ENCODE measurements at regions of chr18 and their contacts with region 1.

Region 1: GRCh38 chr18:74994502-74995419 is 214.2 kb downstream of the PTGR3 start:
- DNase-seq: no peak
- H3K4me3 Mint-ChIP-seq: peak overlapping the region; percentile 59
- H3K27ac Mint-ChIP-seq: peak overlapping the region; percentile 89
- H3K4me1 Mint-ChIP-seq: peaks cover 47% of the 10 kb centered on the region
- H3K27me3 Mint-ChIP-seq: no peaks in the 10 kb centered on the region

Region 2: GRCh38 chr18:74935434-74935833 is 59.3 kb before region 1 on chr18:
- CTCF ChIA-PET with region 1: no interaction called
- POLR2A ChIA-PET with region 1: no interaction called
- DNase-seq: no peak
- H3K4me3 Mint-ChIP-seq: no peak overlapping the region
- H3K27ac Mint-ChIP-seq: no peak overlapping the region
- H3K4me1 Mint-ChIP-seq: no peaks in the 10 kb centered on the region
- H3K27me3 Mint-ChIP-seq: no peaks in the 10 kb centered on the region

Region 3: DNA sequence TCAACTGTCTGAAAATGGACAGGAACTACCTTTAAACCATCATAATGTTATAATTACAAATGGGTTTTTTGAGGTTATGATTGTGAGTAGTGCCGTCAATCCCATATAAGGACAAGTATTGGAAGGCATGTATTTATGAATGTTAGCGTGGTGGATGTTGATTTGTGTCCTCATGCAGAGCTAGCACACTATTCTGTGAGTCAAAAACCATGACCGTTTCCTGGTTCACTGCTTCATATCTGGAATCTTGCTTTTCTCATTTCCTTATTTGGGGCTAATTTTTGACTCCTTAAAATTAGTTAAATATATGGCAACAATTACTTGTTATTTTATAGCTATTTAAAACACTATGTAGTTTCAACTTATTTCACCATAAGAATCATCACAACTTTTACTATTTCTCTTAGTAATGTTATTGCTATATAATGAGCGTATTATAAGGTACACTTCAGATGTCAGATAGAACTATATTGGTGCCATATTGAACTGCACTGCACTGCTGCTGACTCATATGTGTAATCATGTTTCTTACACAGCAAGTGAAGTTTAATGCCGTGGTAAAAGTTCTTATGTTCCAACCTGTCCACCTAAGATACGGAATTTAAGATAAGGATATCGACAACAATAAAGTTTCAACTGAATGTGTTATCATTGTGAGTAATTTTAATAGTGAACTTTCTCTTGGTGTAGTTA is 21.4 kb after region 1 on chr18:
- CTCF ChIA-PET with region 1: no interaction called
- POLR2A ChIA-PET with region 1: interaction called, 10 read pairs
- DNase-seq: no peak
- H3K4me3 Mint-ChIP-seq: no peak overlapping the region
- H3K27ac Mint-ChIP-seq: no peak overlapping the region
- H3K4me1 Mint-ChIP-seq: peaks cover 3% of the 10 kb centered on the region
- H3K27me3 Mint-ChIP-seq: no peaks in the 10 kb centered on the region

Measured in activated CD4-positive, alpha-beta T cell treated with anti-CD3 and anti-CD28 coated beads, Interleukin-2, amount 10 ng/mL, durations not matched to agents 7 days and 5 days (primary cell).